ENCODE measurements at regions of chr20 and their contacts with region 1.

Region 1: DNA sequence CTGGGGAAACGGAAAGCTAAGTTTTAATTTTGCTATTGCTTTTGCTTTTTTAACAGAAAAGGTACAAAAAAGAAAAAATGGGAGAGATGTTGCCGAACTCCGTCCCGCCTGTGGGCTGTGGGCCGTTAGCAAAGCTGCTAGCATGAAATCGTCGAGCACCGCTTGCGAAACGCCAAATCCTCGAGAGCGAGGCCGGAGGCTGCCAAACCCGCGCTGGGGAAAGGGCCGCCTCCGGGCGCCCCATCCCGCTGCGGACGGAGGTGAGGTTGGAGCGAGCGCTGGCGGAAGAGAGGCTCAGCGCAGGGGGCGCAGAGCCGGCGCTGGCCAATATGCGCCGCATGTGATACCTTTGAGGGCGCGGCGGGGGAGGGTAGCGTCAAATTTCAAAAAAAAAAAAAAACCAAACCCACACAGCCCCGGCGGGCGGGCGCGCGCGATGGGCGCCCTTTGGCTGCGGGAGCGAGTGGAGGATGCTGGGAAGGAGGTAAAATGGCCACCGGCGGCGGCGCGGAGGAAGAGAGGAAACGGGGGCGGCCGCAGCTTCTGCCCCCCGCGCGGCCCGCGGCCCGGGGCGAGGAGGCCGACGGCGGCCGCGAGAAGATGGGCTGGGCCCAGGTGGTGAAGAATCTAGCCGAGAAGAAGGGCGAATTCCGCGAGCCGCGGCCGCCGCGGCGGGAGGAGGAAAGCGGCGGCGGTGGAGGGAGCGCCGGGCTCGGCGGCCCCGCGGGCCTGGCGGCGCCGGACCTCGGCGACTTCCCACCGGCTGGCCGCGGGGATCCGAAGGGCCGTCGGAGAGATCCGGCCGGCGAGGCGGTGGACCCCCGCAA is at the start of gene ZCCHC3:
- DNase-seq: peak; percentile 80 to 88
- H3K4me3 ChIP-seq: peak within 1 kb of the TSS; percentile 69 to 99 (median 96)
- H3K27ac ChIP-seq: peak within 1 kb of the TSS; percentile 90
- H3K4me1 ChIP-seq: peaks cover 12 to 22% (median 14%) of the 10 kb centered on the region in 4 experiments
- H3K27me3 ChIP-seq: peaks cover 0 to 7% (median 1%) of the 10 kb centered on the region in 4 experiments; a peak in 2 of 7 replicates
- CTCF ChIP-seq: peak in 2 of 3 experiments; percentile 4 to 18; a peak in 2 of 4 replicates
- EP300 ChIP-seq: no peak; a peak in 1 of 3 replicates
- POLR2A ChIP-seq: peak; percentile 71 to 77; a peak in 2 of 3 replicates
- RAD21 ChIP-seq: peak in 1 of 2 experiments; percentile 36; a peak in 2 of 4 replicates
- total RNA-seq, gene ZCCHC3: 52.4 and 54.0 TPM in 2 replicates

Region 2: GRCh38 chr20:266596-267562 is 30.4 kb before region 1 on chr20:
- CTCF ChIA-PET with region 1: interaction called, 17 read pairs
- POLR2A ChIA-PET with region 1: interaction called, 8 read pairs
- DNase-seq: peak; percentile 84 to 99
- H3K4me3 ChIP-seq: peak overlapping the region; percentile 4 to 53 (median 31); a peak in 6 of 8 replicates
- H3K27ac ChIP-seq: no peak overlapping the region
- H3K4me1 ChIP-seq: 0 out of 7 replicates have a peak, but pooled peaks cover 0 to 2% (median 0%) of the 10 kb centered on the region in 4 experiments
- H3K27me3 ChIP-seq: peaks cover 0 to 26% (median 11%) of the 10 kb centered on the region in 4 experiments; a peak in 6 of 7 replicates
- CTCF ChIP-seq: peak; percentile 96 to 98 (median 97)
- EP300 ChIP-seq: no peak
- POLR2A ChIP-seq: peak in 1 of 2 experiments; percentile 94; a peak in 2 of 3 replicates
- RAD21 ChIP-seq: peak; percentile 95

Region 3: GRCh38 chr20:278607-279571 is 18.4 kb before region 1 on chr20:
- CTCF ChIA-PET with region 1: interaction called, 26 read pairs
- POLR2A ChIA-PET with region 1: interaction called, 61 read pairs
- DNase-seq: peak in 1 of 2 experiments; percentile 61
- H3K4me3 ChIP-seq: peak overlapping the region; percentile 4 to 47 (median 20); a peak in 6 of 8 replicates
- H3K27ac ChIP-seq: no peak overlapping the region
- H3K4me1 ChIP-seq: peaks cover 0 to 4% (median 4%) of the 10 kb centered on the region in 4 experiments; a peak in 4 of 7 replicates
- H3K27me3 ChIP-seq: peaks cover 0 to 2% (median under 1%) of the 10 kb centered on the region in 4 experiments; a peak in 2 of 7 replicates
- CTCF ChIP-seq: peak in 2 of 3 experiments; percentile 51 to 63; a peak in 3 of 4 replicates
- EP300 ChIP-seq: no peak
- POLR2A ChIP-seq: no peak
- RAD21 ChIP-seq: no peak; a peak in 2 of 4 replicates

Region 4: DNA sequence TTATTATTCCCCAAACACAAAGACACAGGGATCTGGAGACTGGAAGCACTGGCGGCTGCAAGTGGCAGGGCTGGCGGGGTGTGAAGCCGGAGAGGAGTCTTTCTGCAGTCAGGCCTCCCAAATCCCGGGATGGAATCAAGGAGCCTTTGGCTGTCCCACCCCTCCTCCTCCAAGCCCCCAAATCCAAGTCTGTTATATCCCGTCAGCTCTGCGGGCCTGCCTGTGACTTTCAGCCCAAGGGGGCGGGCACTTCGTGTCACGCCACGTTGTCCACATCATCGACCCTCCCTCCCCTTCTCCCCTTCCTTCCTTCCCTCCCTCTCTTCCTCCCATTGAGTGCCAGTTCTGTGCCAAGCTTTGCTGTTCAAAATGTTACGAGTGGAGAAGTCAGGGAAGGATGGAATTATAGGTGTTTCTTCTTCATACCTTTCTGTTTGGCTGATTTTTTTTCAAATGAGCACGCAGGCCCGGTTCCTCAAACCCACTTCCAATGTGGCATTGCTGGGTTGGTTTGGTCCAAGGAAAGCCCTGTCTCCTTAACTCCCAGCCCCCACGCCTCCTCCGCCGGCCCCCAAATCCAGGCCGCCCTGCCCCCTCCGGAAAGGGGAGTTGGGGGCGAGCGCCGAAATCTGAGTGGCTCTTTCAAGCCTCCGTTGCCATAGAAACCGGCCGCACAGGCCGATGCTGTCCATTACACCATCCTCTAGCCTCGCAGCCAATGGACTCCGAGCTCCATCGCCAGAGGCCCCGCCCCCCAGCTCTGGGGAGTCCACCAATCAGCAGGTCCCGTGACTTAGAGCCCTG is 12.7 kb after region 1 on chr20:
- CTCF ChIA-PET with region 1: interaction called, 22 read pairs
- POLR2A ChIA-PET with region 1: interaction called, 84 read pairs
- DNase-seq: peak; percentile 98 to 99
- H3K4me3 ChIP-seq: peak overlapping the region; percentile 42 to 60 (median 59)
- H3K27ac ChIP-seq: peak overlapping the region; percentile 69
- H3K4me1 ChIP-seq: peaks cover 4 to 11% (median 6%) of the 10 kb centered on the region in 4 experiments
- H3K27me3 ChIP-seq: no peaks in the 10 kb centered on the region
- CTCF ChIP-seq: no peak
- EP300 ChIP-seq: no peak
- POLR2A ChIP-seq: peak; percentile 54 to 77
- RAD21 ChIP-seq: no peak

Measured in H1 (cell line).